Stomach (tissue), 19 donors: ENCODE measurements at regions of chr3 and their contacts with region 1.

Region 1: GRCh38 chr3:86774082-86774691 is 216.8 kb downstream of the VGLL3 start:
- DNase-seq: peak in 1 of 2 donors; percentile 68
- H3K4me3 ChIP-seq: no peak overlapping the region
- H3K27ac ChIP-seq: no peak overlapping the region
- H3K4me1 ChIP-seq: no peaks in the 10 kb centered on the region
- H3K27me3 ChIP-seq: no peaks in the 10 kb centered on the region
- CTCF ChIP-seq: peak in 4 of 7 experiments; percentile 16 to 51 (median 43)
- EP300 ChIP-seq: no peak
- POLR2A ChIP-seq: no peak

Region 2: GRCh38 chr3:87082796-87083440 is 308.7 kb after region 1 on chr3:
- intact Hi-C with region 1: loop called (anchors 5 kb)
- DNase-seq: peak in 1 of 2 donors; percentile 86
- H3K4me3 ChIP-seq: no peak overlapping the region
- H3K27ac ChIP-seq: no peak overlapping the region
- H3K4me1 ChIP-seq: no peaks in the 10 kb centered on the region
- H3K27me3 ChIP-seq: no peaks in the 10 kb centered on the region
- CTCF ChIP-seq: peak in 5 of 7 experiments; percentile 21 to 65 (median 50)
- EP300 ChIP-seq: no peak
- POLR2A ChIP-seq: no peak

Region 3: DNA sequence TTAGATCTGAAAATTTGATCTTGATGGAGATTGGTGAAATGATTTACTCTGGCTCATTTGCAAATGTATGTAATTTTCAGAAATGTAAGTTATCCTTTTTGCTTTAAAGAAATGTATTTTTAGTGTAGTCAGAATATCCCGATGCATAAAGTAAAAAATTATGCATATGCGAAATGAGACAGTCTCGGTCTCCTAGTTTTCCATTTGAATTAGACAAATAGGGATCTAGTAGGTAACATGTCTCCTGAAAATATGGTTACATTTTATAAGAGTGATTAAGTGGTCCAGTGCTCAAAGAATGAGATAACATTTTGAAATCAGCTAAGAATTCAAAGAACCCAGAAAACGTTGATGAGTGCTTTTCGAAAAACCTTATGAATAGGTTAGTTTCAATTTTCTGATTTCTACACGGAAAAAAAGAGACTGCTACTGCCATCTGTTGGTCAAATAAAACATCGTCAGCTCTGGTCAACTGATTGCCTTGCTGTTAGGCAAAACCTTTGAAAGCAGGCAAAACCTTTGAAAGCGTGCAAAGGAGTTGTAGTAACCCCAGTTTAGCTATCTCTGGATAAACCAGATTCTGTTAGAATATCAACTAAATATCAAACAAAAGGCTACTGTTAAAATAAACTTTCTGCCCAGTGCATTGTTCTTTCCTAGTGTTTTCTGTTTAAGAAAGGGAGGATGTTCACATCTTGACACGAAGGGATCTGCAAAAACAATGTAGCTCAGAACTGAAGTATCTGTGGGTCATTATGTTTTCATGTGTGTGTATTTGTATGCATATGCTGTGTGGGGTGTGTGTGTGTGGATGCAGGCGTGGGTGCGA is 393.7 kb after region 1 on chr3:
- intact Hi-C with region 1: loop called (anchors 10 kb)
- DNase-seq: peak in 1 of 2 donors; percentile 74
- H3K4me3 ChIP-seq: peak overlapping the region; percentile 22 to 42 (median 32)
- H3K27ac ChIP-seq: no peak overlapping the region
- H3K4me1 ChIP-seq: peaks cover 0 to 4% (median 0%) of the 10 kb centered on the region in 4 donors
- H3K27me3 ChIP-seq: no peaks in the 10 kb centered on the region
- CTCF ChIP-seq: peak in 4 of 7 experiments; percentile 13 to 59 (median 48)
- EP300 ChIP-seq: no peak
- POLR2A ChIP-seq: no peak